ENCODE measurements at regions of chr3 and their contacts with region 1.

Region 1: DNA sequence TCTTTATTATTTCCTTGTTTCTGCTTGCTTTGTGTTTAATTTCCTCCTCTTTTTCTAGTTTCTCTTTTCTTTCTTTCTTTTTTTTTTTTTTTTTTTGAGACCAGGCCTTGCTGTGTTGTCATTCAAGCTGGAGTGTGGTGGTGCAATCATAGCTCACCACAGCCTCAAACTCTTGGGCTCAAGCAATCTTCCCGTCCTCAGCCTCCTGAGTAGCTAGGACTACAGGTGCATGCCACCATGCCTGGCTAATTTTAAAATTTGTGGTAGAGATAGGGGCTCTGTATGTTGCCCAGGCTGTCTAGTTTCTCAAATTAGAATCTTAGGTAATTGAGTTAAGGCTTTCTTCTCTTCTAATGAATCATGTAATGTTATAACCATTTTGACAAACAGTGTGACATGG is 22.4 kb downstream of the SLMAP start:
- DNase-seq: no peak
- ATAC-seq: no peak
- H3K4me3 ChIP-seq: no peak overlapping the region
- H3K4me3 Mint-ChIP-seq: no peak overlapping the region
- H3K27ac ChIP-seq: no peak overlapping the region
- H3K27ac Mint-ChIP-seq: no peak overlapping the region
- H3K4me1 ChIP-seq: no peaks in the 10 kb centered on the region
- H3K4me1 Mint-ChIP-seq: peaks cover 39% of the 10 kb centered on the region
- H3K27me3 ChIP-seq: no peaks in the 10 kb centered on the region
- H3K27me3 Mint-ChIP-seq: no peaks in the 10 kb centered on the region
- CTCF ChIP-seq: no peak

Region 2: DNA sequence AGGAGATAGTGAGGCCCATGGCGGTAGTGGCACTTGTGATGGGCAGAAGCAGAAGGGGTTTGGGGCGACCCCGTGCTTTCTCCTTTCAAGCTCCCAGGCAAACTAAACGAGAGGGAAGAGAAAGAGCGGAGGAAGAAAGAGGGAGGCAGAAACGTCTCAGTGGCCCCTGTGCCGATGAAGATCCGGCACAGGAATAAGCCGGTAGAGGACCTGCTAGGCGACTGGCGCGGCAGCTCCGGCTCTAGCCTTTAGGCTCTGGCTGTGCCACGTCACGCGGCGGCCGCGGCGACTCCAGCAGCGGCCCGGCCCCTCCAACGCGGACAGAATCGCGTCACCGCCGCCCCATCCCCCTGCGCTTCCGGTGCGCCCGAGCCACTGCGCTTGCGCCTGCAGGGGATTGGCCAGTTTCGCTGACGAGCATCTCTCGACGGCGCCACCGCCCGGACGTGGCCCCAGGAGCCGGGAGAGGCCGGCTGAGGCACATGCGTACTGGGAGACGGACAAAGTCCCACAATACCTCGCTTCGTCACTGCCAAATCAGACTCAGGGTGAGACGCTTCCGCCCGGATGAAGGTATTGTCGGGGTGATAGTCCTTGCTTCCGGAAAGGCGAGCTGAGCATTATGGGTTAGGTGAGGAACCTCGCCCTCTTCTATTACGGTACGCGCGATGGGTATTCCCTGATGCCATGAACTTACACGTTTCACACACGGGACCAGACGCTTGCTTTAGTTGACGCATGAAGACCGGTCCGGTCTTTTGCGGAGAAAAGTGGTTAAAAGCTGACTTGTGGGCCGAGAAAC is 181.2 kb before region 1 on chr3 and contains the start of gene ARF4:
- CTCF ChIA-PET with region 1: no interaction called
- POLR2A ChIA-PET with region 1: no interaction called
- intact Hi-C with region 1: no loop called
- DNase-seq: peak; percentile 98 to 100 (median 99)
- ATAC-seq: peak; percentile 87
- H3K4me3 ChIP-seq: peak within 1 kb of the TSS; percentile 92 to 95
- H3K4me3 Mint-ChIP-seq: peak within 1 kb of the TSS; percentile 99
- H3K27ac ChIP-seq: peak within 1 kb of the TSS; percentile 93 to 95
- H3K27ac Mint-ChIP-seq: peak within 1 kb of the TSS; percentile 100
- H3K4me1 ChIP-seq: peaks cover 42% of the 10 kb centered on the region
- H3K4me1 Mint-ChIP-seq: peaks cover 58% of the 10 kb centered on the region
- H3K27me3 ChIP-seq: no peaks in the 10 kb centered on the region
- H3K27me3 Mint-ChIP-seq: no peaks in the 10 kb centered on the region
- CTCF ChIP-seq: no peak
- total RNA-seq, gene ARF4: 72.7 to 73.5 TPM

Region 3: DNA sequence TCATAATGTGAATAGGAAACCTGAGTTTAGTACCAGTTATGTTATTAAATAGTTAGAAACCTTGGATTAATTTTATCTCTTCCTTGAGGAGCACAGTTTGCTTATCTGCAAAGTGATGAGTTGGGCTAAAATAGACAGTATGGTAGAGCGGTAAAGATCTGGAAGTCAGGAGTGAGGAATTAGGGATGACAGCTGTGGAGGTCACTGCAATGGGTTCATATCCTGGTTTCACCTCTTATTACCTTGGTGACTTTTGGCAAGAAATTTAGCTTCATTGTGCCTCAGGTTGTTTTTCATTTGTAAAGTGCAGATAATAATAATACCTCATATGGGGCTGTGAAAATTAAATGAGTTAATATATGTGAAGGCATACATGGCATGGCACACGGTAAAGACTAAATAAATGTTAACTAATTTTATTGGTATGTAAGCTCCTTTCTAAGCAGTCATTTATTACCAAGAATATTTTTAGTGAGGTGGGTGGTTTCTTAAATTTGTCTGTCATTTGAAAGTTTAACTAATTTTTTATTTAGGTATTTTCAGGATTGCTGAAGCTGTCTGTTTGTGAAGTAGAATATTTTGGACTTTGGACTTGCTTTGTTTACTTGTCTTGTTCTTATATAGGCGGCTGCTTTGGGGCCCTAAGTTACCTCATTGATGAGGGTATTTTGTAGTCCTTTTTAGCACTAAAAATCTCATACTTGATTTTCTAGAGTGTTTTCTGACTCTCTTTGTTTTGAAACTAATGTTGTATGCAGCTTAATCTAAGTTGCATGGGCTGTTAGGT is 19.4 kb after region 1 on chr3:
- CTCF ChIA-PET with region 1: no interaction called
- POLR2A ChIA-PET with region 1: no interaction called
- intact Hi-C with region 1: loop called in 1 of 2 experiments (anchors 1 kb)
- DNase-seq: no peak
- ATAC-seq: no peak
- H3K4me3 ChIP-seq: no peak overlapping the region
- H3K4me3 Mint-ChIP-seq: no peak overlapping the region
- H3K27ac ChIP-seq: no peak overlapping the region
- H3K27ac Mint-ChIP-seq: no peak overlapping the region
- H3K4me1 ChIP-seq: peaks cover 2% of the 10 kb centered on the region
- H3K4me1 Mint-ChIP-seq: peaks cover 56% of the 10 kb centered on the region
- H3K27me3 ChIP-seq: no peaks in the 10 kb centered on the region
- H3K27me3 Mint-ChIP-seq: no peaks in the 10 kb centered on the region
- CTCF ChIP-seq: no peak

Measured in CD8-positive, alpha-beta T cell (primary cell).